Prostate gland (tissue), 2 donors: ENCODE measurements at regions of chr2 and their contacts with region 1.

Region 1: GRCh38 chr2:218849721-218850120 is 9.9 kb upstream of the WNT6 start:
- DNase-seq: no peak
- H3K4me3 ChIP-seq: no peak overlapping the region
- H3K27ac ChIP-seq: no peak overlapping the region
- H3K4me1 ChIP-seq: no peaks in the 10 kb centered on the region
- H3K27me3 ChIP-seq: no peaks in the 10 kb centered on the region
- CTCF ChIP-seq: no peak
- POLR2A ChIP-seq: no peak

Region 2: DNA sequence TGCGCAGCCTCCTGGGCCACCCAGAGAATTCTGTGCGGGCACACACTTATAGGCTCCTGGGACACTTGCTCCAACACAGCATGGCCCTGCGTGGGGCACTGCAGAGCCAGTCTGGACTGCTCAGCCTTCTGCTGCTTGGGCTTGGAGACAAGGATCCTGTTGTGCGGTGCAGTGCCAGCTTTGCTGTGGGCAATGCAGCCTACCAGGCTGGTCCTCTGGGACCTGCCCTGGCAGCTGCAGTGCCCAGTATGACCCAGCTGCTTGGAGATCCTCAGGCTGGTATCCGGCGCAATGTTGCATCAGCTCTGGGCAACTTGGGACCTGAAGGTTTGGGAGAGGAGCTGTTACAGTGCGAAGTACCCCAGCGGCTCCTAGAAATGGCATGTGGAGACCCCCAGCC is 150.8 kb before region 1 on chr2:
- intact Hi-C with region 1: no loop called
- DNase-seq: no peak
- H3K4me3 ChIP-seq: no peak overlapping the region
- H3K27ac ChIP-seq: no peak overlapping the region
- H3K4me1 ChIP-seq: no peaks in the 10 kb centered on the region
- H3K27me3 ChIP-seq: no peaks in the 10 kb centered on the region
- CTCF ChIP-seq: no peak
- POLR2A ChIP-seq: no peak

Region 3: DNA sequence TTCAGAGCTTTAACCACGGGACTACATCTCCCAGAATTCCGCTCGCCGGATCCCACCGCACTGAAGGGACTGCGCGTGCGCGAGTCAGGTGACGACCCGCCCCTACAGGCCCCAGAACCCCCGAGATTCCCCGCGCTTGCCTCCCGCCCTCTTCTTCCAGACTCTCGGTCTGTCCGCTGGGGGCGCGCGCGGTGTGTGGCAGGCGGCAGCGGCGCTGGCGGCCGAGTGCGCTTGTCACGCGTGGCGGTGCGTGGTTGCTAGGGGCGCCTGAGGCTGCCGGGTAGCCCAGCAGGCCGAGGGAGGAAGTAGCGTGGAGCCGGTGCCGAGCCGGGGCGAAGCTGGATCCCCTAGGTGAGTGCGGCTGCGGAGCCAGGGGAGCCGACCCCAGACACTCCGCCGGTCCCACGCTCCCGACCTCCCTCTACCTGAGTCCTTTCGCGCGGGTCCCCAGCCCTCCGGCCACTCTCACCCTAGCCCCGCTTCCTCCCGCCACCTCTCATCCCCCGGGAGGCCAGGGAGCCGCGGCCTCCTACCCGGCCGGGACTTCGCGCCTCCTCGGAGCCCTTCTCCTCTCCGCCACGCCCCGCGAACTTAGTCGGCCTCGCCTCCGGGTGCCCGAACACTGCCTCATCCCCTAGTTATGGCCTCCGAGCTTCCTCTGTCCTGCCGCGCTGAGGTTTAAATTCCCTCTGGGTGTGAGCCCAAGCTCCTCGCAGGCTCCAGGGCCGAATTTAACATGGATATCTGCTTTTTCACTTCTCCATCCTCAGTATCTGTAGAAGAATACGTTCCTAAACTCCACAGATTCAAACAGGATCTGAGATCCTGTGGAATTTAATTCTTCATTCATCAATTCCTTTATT is 138.8 kb before region 1 on chr2 and contains the start of gene TTLL4:
- intact Hi-C with region 1: loop called (anchors 2 kb)
- DNase-seq: peak; percentile 97
- H3K4me3 ChIP-seq: peak within 1 kb of the TSS; percentile 69 to 78
- H3K27ac ChIP-seq: peak within 1 kb of the TSS; percentile 93 to 95
- H3K4me1 ChIP-seq: no peaks in the 10 kb centered on the region
- H3K27me3 ChIP-seq: no peaks in the 10 kb centered on the region
- CTCF ChIP-seq: peak; percentile 89 to 99 (median 93)
- POLR2A ChIP-seq: peak; percentile 87
- total RNA-seq, gene TTLL4: 21.1 to 63.8 TPM

Region 4: DNA sequence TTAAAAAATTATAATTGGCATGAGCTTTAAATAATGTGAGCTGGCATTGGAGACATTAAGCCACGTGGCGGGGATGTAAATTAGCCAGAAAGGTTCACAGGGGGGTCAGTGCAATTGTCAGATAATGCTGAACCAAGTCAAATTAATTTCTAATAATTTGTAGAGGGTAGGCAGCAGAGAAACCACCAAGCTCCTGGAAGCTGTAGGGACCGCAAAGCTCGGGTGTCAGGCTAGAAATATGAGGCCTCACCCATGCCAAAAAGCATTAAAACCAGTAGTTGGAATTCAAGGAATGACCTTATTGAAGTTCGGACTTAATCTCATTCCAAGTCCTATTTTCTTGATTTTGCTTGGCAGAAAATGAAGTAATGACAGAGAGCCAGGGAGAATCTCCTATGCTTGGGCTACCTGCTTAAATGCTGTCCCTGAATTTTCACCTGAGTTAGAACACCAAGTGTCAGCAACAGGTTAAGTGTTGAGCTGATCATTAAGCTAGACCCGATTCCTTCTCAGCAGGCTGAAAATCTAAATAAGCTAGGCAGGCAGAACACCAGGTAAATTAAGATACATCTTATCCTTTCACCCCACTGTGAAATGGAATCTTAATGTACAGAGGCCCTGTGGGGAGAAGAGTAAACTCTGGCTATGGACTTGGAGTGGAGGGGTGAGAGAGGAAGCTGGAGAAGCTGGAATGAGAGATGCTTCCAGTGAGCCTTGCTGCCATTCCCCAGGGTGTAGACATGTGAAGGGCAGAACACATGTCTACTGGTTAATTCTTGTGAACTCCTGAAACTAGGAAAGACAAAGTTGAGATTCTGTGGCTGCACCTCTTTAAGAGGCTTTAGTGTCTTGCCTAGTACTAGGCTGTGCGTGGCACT is 1297.7 kb after region 1 on chr2:
- intact Hi-C with region 1: no loop called
- DNase-seq: no peak
- H3K4me3 ChIP-seq: no peak overlapping the region
- H3K27ac ChIP-seq: no peak overlapping the region
- H3K4me1 ChIP-seq: no peaks in the 10 kb centered on the region
- H3K27me3 ChIP-seq: no peaks in the 10 kb centered on the region
- CTCF ChIP-seq: no peak
- POLR2A ChIP-seq: no peak